Activated CD8-positive, alpha-beta T cell treated with anti-CD3 and anti-CD28 coated beads, Interleukin-2, amount 10 ng/mL, durations not matched to agents 7 days and 5 days (primary cell): ENCODE measurements at regions of chr19 and their contacts with region 1.

Region 1: GRCh38 chr19:55503502-55504251 is 15.4 kb downstream of the SSC5D start:
- DNase-seq: peak; percentile 93
- ATAC-seq: peak; percentile 94
- H3K4me3 Mint-ChIP-seq: peak overlapping the region; percentile 70
- H3K27ac Mint-ChIP-seq: peak overlapping the region; percentile 85
- H3K4me1 Mint-ChIP-seq: peaks cover 19% of the 10 kb centered on the region
- H3K27me3 Mint-ChIP-seq: no peaks in the 10 kb centered on the region

Region 2: GRCh38 chr19:55289117-55289796 is 214.4 kb before region 1 on chr19:
- CTCF ChIA-PET with region 1: interaction called, 12 read pairs
- POLR2A ChIA-PET with region 1: no interaction called
- DNase-seq: no peak
- ATAC-seq: no peak
- H3K4me3 Mint-ChIP-seq: no peak overlapping the region
- H3K27ac Mint-ChIP-seq: no peak overlapping the region
- H3K4me1 Mint-ChIP-seq: peaks cover 13% of the 10 kb centered on the region
- H3K27me3 Mint-ChIP-seq: no peaks in the 10 kb centered on the region

Region 3: GRCh38 chr19:55461259-55461973 is 42.3 kb before region 1 on chr19 and contains the start of gene ISOC2:
- CTCF ChIA-PET with region 1: interaction called, 75 read pairs
- POLR2A ChIA-PET with region 1: no interaction called
- DNase-seq: peak; percentile 100
- ATAC-seq: peak; percentile 99
- H3K4me3 Mint-ChIP-seq: peak within 1 kb of the TSS; percentile 87
- H3K27ac Mint-ChIP-seq: peak within 1 kb of the TSS; percentile 71
- H3K4me1 Mint-ChIP-seq: peaks cover 28% of the 10 kb centered on the region
- H3K27me3 Mint-ChIP-seq: no peaks in the 10 kb centered on the region
- total RNA-seq, gene ISOC2: 31.9 to 32.1 TPM

Region 4: DNA sequence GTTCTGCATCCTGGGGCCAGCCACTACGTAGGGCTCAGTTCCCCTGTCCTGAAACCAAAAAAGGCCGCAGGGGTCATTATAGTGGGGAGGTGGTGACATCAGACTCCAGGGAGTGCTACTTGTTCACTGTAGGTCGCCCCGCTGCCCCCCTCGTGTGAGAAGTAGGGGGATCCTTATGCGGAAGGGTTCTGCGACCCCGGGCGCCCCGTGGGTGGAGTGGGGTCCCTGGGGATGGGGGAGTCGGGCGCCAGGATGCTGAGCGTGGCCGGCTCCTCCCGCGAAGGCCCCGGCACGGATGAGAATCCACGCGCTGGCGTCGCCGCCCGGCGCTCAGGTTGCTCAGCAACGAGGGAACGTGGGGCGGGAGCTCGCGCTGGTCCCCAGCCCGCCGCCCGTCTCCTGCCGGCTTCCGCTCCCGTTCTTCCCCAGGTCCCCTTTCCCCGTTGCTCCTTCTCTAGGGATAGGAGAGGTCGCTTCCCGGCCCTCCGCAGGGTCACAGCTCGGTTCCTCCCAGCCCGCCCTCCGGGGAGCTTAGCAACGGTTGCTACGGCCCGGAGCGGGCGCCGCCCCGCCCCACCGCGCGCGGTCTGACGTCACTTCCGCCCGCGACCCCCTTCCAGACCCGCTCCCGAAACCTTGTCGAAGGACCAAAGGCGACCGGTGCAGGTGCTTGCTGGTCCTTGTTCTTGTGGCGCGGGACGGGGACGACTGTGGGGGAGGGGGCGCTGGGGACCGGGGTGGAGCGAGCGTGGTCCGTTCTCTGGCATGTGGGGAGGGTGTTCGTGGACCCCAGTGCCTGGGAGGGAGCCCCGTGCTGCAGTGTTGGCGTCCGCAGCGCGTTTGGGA is 18.9 kb before region 1 on chr19 and contains the start of gene NAT14:
- CTCF ChIA-PET with region 1: interaction called, 14 read pairs
- POLR2A ChIA-PET with region 1: interaction called, 3 read pairs
- DNase-seq: peak; percentile 71
- ATAC-seq: peak; percentile 67
- H3K4me3 Mint-ChIP-seq: peak within 1 kb of the TSS; percentile 76
- H3K27ac Mint-ChIP-seq: peak within 1 kb of the TSS; percentile 88
- H3K4me1 Mint-ChIP-seq: peaks cover 16% of the 10 kb centered on the region
- H3K27me3 Mint-ChIP-seq: no peaks in the 10 kb centered on the region
- total RNA-seq, gene NAT14: 16.2 to 16.4 TPM

Region 5: DNA sequence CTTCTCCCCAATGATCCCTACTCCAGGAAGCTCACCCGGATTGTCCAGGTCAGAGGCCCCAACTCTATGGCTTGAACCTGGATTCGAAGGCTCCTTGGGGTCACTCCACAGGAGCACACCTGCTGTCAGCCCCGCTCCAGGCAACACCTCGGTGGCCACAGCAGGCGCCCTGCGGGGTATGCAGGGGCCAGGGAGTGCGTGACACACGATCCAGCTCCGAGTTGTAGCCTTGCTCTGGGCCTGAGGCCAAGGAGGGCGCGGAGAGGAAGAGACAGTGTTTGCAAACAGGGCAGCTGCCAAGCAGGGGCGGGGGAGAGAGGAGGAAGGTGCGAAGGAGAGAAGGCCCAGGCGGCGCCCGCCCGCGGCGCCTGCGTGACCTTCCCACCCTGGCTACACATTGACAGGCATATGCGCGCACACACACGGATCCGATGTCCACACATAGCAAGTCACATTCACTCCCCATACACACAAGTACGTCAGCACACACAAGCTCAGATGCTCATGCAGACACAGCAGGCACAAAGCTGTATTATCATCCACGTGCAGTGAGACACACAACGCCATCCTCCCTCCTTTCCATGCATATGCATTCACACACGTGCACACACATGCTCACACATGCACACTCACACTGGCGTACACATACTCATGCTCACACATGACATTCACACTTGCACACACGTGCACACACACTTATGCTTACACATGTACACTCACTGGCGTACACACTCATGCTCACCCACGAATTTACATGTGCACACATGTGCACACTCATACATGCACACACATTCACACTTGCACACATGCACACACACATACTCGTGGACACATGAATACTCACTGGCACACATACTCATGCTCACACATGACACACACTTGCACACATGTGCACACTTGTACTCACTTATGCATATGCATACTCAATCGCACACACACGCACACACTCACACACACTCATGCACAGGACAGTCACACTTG is 22.8 kb after region 1 on chr19:
- CTCF ChIA-PET with region 1: no interaction called
- POLR2A ChIA-PET with region 1: no interaction called
- DNase-seq: no peak
- ATAC-seq: no peak
- H3K4me3 Mint-ChIP-seq: no peak overlapping the region
- H3K27ac Mint-ChIP-seq: no peak overlapping the region
- H3K4me1 Mint-ChIP-seq: no peaks in the 10 kb centered on the region
- H3K27me3 Mint-ChIP-seq: no peaks in the 10 kb centered on the region

Region 6: DNA sequence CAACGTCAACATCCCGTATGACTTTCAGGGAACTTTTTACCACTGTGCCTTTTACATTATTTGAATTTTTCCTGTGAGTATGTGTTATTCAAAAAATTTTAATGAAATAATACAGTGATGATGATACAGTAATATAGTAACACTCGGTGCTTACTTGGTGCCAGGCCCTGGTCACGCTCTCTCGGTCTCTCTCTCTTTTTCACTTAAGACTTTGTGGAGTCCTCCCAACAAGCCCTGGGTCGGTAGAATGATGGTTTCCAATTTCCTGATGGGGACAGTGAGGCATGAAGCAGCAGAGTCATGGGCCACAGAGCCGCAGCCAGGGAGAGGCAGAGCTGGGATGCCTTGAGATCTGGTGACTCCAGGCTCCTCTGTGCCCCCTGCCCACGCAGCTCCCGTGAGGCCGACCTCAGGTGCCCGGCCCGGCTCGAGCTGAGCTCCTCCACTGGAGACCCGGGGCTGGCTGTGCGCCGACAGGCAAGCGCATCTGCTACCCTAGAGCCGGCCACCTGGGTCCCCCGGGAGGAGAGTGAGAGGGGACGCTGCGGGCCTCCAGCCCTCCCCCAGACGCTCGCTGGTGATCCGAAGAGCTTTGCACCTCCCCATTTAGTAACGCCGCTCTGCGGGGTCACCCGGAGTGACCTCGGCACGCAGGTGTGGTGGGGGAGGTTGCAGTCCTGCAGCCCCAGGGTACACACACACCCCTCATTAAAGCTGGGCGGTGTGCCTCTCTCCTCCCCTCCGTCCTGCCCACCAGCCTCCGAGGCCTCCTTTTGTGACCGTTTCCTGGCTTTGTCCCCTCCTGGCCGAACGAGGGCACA is 46.0 kb after region 1 on chr19:
- CTCF ChIA-PET with region 1: no interaction called
- POLR2A ChIA-PET with region 1: no interaction called
- DNase-seq: no peak
- ATAC-seq: no peak
- H3K4me3 Mint-ChIP-seq: no peak overlapping the region
- H3K27ac Mint-ChIP-seq: no peak overlapping the region
- H3K4me1 Mint-ChIP-seq: no peaks in the 10 kb centered on the region
- H3K27me3 Mint-ChIP-seq: peaks cover 3% of the 10 kb centered on the region

Region 7: DNA sequence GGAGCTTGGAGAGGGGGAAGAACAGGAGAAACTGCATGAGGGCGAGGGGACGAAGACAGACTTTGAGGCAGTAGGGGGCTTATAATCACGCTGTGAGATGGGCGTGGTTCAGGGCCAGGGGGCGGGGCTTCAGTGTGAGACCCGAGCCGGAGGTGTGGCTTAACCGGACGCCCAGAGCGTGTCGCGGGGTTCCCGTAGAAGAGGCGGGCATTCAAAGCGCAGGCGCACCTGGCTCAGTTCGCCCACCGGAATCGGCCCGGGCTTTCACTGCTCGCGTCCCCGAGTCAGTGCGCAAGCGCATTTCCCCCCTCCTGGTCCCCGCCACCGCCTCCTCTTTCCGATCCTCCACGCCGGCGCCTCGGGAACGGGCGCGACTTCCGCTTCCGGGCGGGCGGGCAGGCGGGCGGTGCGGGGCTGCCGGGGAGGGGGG is 101.5 kb after region 1 on chr19:
- CTCF ChIA-PET with region 1: interaction called, 11 read pairs
- POLR2A ChIA-PET with region 1: no interaction called
- DNase-seq: peak; percentile 99
- ATAC-seq: peak; percentile 84
- H3K4me3 Mint-ChIP-seq: peak overlapping the region; percentile 83
- H3K27ac Mint-ChIP-seq: peak overlapping the region; percentile 94
- H3K4me1 Mint-ChIP-seq: peaks cover 61% of the 10 kb centered on the region
- H3K27me3 Mint-ChIP-seq: no peaks in the 10 kb centered on the region